ENCODE measurements at regions of chr7 and their contacts with region 1.

Region 1: DNA sequence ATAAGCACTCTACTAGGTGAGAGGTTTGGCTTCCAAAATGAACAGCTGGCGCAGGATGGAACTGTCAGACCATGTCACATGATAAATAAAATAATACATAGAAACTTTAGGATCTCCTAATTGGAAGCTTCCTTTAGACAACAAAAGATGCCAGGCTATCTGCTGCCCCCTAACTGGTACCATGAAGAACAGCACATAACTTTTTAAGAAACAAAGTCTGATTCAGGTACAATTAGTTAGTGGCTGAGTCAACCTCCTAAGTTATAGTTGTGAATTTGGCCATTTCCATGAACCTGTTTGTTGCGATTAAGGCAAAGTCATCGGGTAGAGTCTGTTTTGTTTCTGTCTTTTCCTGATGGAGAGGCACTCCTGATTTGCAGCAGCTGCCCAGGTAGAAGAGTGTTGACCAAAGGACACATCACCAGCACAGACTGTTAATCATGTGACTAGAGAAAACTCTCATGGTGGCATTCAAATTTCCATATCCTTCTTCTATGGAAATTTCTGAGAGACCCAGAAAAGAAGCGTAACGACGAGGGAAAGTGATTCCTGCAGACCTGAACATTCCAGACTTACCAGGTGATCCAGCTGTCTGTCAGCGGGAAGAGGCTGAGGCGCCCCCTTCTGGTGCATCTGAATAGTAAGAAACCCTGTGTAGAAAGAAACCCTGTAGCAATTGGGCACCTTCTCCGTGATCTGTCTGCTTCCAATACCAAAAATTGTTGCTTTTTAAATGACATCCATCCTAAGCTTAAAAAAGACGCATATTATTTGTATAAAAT is 8.6 kb upstream of the INHBA start:
- DNase-seq: peak in 1 of 2 experiments; percentile 82
- H3K4me3 ChIP-seq: peak overlapping the region in 2 of 4 experiments; percentile 10 to 42; a peak in 4 of 8 replicates
- H3K27ac ChIP-seq: no peak overlapping the region
- H3K4me1 ChIP-seq: peaks cover 0 to 2% (median under 1%) of the 10 kb centered on the region in 4 experiments; a peak in 2 of 7 replicates
- H3K27me3 ChIP-seq: peaks cover 3 to 7% (median 6%) of the 10 kb centered on the region in 4 experiments; a peak in 6 of 7 replicates
- CTCF ChIP-seq: peak; percentile 69 to 79 (median 70)
- EP300 ChIP-seq: no peak
- POLR2A ChIP-seq: no peak
- RAD21 ChIP-seq: peak; percentile 74 to 75

Region 2: GRCh38 chr7:41003031-41003925 is 708.2 kb before region 1 on chr7:
- CTCF ChIA-PET with region 1: interaction called, 23 read pairs
- POLR2A ChIA-PET with region 1: no interaction called
- DNase-seq: peak; percentile 68 to 86
- H3K4me3 ChIP-seq: no peak overlapping the region
- H3K27ac ChIP-seq: no peak overlapping the region
- H3K4me1 ChIP-seq: peaks cover 0 to 3% (median 1%) of the 10 kb centered on the region in 4 experiments; a peak in 1 of 7 replicates
- H3K27me3 ChIP-seq: no peaks in the 10 kb centered on the region
- CTCF ChIP-seq: peak; percentile 33 to 87 (median 75)
- EP300 ChIP-seq: no peak
- POLR2A ChIP-seq: no peak
- RAD21 ChIP-seq: peak; percentile 77 to 83

Region 3: DNA sequence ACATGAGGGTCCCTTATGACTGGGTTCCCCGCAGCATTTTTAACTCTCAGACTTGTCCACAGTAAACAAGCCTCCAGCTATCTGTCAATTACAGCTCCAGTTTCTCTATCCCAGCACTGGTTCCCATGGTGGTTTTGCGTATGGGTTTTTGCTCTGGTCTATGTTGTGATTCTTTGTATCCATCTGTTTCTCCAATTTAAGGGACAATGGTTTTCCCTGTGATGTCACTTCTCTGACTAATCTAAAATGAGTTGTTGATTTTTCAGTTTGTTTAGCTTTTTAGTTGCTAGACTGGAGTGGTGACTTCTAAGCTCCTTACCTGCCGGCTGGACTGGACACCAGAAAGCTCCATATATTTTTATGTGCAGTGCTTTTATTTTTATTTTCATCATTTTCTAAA is 312.3 kb before region 1 on chr7:
- CTCF ChIA-PET with region 1: interaction called, 10 read pairs
- POLR2A ChIA-PET with region 1: no interaction called
- DNase-seq: no peak
- H3K4me3 ChIP-seq: no peak overlapping the region
- H3K27ac ChIP-seq: no peak overlapping the region
- H3K4me1 ChIP-seq: no peaks in the 10 kb centered on the region
- H3K27me3 ChIP-seq: no peaks in the 10 kb centered on the region
- CTCF ChIP-seq: no peak
- EP300 ChIP-seq: no peak
- POLR2A ChIP-seq: no peak
- RAD21 ChIP-seq: no peak

Region 4: DNA sequence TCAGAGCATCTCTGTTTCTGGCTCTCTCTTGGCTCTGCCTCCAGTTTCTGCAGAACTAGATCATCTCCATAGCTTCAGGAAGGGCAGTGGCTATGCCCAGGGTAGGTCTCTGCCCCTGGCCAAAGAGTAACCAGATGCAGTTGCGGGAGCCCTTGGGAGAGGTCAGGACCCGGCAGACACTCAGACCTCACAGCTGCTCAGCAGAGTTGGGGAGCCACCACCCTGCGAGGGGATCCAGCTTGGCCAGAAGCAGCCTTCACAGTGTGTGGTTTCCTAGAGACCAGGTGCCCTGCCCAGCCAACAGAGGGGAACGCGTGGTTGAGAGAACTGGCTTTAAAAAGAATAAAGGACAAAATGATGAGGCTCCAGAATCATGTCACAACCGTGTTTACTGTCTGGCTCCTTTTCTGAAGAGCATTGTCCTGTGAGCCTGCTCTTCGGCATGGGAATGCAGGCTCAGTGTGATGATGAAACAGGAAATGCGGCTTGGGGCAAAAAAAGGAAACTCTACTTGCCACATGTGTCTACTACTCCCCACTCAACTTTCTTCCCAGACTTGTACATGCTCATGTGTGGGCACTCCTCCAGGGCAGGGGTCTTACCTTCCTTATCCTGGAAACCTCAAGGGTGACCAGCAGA is 251.7 kb before region 1 on chr7:
- CTCF ChIA-PET with region 1: no interaction called
- POLR2A ChIA-PET with region 1: no interaction called
- DNase-seq: no peak
- H3K4me3 ChIP-seq: no peak overlapping the region
- H3K27ac ChIP-seq: no peak overlapping the region
- H3K4me1 ChIP-seq: no peaks in the 10 kb centered on the region
- H3K27me3 ChIP-seq: no peaks in the 10 kb centered on the region
- CTCF ChIP-seq: no peak
- EP300 ChIP-seq: no peak
- POLR2A ChIP-seq: no peak
- RAD21 ChIP-seq: no peak

Region 5: GRCh38 chr7:41696314-41696916 is 15.1 kb before region 1 on chr7:
- CTCF ChIA-PET with region 1: interaction called, 44 read pairs
- POLR2A ChIA-PET with region 1: no interaction called
- DNase-seq: peak; percentile 72 to 88
- H3K4me3 ChIP-seq: no peak overlapping the region
- H3K27ac ChIP-seq: no peak overlapping the region
- H3K4me1 ChIP-seq: peaks cover 1 to 20% (median 16%) of the 10 kb centered on the region in 4 experiments; a peak in 5 of 7 replicates
- H3K27me3 ChIP-seq: 0 out of 7 replicates have a peak, but pooled peaks cover 0 to 3% (median 0%) of the 10 kb centered on the region in 4 experiments
- CTCF ChIP-seq: peak; percentile 59 to 84 (median 79)
- EP300 ChIP-seq: no peak
- POLR2A ChIP-seq: no peak
- RAD21 ChIP-seq: peak; percentile 86 to 90

Region 6: GRCh38 chr7:41731492-41732435 is 20.3 kb after region 1 on chr7:
- CTCF ChIA-PET with region 1: interaction called, 35 read pairs
- POLR2A ChIA-PET with region 1: no interaction called
- DNase-seq: no peak
- H3K4me3 ChIP-seq: no peak overlapping the region
- H3K27ac ChIP-seq: no peak overlapping the region
- H3K4me1 ChIP-seq: 0 out of 7 replicates have a peak, but pooled peaks cover 0 to 2% (median 0%) of the 10 kb centered on the region in 4 experiments
- H3K27me3 ChIP-seq: peaks cover 0 to 3% (median 0%) of the 10 kb centered on the region in 4 experiments; a peak in 2 of 7 replicates
- CTCF ChIP-seq: peak in 1 of 3 experiments; percentile 25; a peak in 1 of 4 replicates
- EP300 ChIP-seq: no peak
- POLR2A ChIP-seq: no peak
- RAD21 ChIP-seq: peak in 1 of 2 experiments; percentile 61; a peak in 3 of 4 replicates